HCT116 (cell line): ENCODE measurements at regions of chr22 and their contacts with region 1.

Region 1: DNA sequence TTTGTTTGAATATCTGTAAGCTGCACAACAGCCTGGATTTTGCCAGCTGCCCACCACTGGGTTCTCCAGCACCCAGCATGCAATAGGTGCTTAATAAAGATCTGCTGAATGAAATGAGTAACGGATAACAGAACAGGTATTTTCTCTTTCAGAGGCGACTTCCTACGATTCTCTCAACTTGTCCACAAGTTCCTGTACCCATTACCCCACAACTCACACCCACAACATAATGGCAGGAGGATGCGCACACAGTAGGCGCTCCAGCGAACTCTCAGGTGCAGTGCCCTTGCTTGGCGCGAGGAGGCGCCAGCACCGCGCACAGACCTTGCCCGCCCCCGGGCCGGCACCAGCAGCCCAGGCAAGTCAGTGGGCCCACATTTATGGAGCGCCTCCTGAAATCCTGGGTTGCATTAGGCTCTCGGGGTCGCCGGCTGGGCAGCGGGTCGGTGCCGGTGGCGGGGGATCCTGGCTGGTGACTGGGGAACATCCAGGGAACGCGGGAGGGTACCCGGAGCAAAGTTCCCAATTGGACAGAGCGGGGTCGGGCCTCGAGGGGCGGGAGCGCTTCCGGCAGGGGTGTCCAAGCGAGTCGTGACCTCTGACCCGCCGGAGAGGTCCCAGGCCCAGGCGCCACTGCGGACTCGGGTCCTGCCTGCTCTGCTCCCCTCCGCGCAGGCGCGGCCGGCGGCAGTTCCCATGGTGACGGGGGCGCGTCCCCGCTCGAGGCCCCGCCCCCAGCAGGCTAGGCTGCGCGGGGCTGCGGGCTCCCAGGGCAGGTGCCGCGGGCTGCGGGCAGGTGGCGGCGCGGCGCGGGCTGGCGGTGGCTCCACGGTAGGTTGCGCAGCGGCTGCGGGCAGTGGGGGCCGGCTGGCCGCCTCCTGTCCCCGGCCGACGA is at the start of gene KIAA1671:
- DNase-seq: peak; percentile 53
- ATAC-seq: peak; percentile 88
- H3K4me3 ChIP-seq: peak within 1 kb of the TSS; percentile 86
- H3K27ac ChIP-seq: peak within 1 kb of the TSS; percentile 98
- H3K4me1 ChIP-seq: peaks cover 34 to 54% of the 10 kb centered on the region in 2 experiments
- H3K27me3 ChIP-seq: no peaks in the 10 kb centered on the region
- CTCF ChIP-seq: peak; percentile 95 to 98 (median 97)
- POLR2A ChIP-seq: peak; percentile 76
- RAD21 ChIP-seq: peak; percentile 98
- total RNA-seq, gene KIAA1671: 36.8 TPM

Region 2: DNA sequence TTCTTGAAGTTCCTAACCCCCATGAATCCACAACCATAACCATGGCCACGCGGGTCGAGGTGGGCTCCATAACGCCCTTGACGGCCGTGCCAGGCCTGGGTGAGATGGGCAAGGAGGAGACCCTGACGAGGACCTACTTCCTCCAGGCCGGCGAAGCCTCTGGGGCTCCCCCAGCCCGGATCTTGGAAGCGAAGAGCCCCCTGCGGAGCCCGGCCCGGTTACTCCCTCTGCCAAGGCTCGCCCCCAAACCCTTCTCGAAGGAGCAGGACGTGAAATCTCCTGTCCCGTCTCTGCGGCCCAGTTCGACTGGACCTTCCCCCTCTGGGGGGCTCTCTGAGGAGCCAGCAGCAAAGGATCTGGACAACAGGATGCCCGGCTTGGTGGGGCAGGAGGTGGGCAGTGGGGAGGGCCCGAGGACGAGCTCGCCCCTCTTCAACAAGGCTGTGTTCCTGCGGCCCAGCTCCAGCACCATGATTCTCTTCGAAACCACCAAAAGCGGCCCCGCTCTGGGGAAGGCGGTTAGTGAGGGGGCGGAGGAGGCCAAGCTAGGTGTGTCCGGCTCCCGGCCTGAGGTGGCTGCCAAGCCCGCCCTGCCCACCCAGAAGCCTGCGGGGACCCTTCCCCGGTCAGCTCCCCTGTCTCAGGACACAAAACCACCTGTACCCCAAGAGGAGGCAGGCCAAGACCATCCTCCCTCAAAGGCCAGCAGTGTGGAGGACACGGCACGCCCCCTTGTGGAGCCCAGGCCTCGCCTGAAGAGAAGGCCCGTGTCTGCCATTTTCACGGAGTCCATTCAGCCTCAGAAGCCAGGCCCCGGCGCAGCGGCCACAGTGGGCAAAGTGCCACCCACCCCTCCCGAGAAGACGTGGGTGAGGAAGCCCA is 76.0 kb after region 1 on chr22:
- CTCF ChIA-PET with region 1: no interaction called
- POLR2A ChIA-PET with region 1: no interaction called
- RAD21 ChIA-PET with region 1: no interaction called
- intact Hi-C with region 1: loop called (anchors 5 kb)
- DNase-seq: no peak
- ATAC-seq: peak; percentile 65
- H3K4me3 ChIP-seq: no peak overlapping the region
- H3K27ac ChIP-seq: no peak overlapping the region; the same call in 1 of the 2 replicates
- H3K4me1 ChIP-seq: peaks cover 24 to 37% of the 10 kb centered on the region in 2 experiments
- H3K27me3 ChIP-seq: no peaks in the 10 kb centered on the region
- CTCF ChIP-seq: peak; percentile 35 to 53 (median 35); a peak in 3 of 6 replicates
- POLR2A ChIP-seq: no peak
- RAD21 ChIP-seq: peak; percentile 73

Region 3: GRCh38 chr22:25048659-25049647 is 96.8 kb after region 1 on chr22:
- CTCF ChIA-PET with region 1: interaction called, 22 read pairs
- POLR2A ChIA-PET with region 1: no interaction called
- RAD21 ChIA-PET with region 1: interaction called, 5 read pairs
- intact Hi-C with region 1: loop called (anchors 1 kb)
- DNase-seq: peak; percentile 46
- ATAC-seq: peak; percentile 95
- H3K4me3 ChIP-seq: no peak overlapping the region
- H3K27ac ChIP-seq: no peak overlapping the region
- H3K4me1 ChIP-seq: peaks cover 0 to 17% of the 10 kb centered on the region in 2 experiments; a peak in 2 of 4 replicates
- H3K27me3 ChIP-seq: no peaks in the 10 kb centered on the region
- CTCF ChIP-seq: peak; percentile 80 to 90 (median 88)
- POLR2A ChIP-seq: no peak
- RAD21 ChIP-seq: peak; percentile 95